PC-3 (cell line): ENCODE measurements at regions of chr10 and their contacts with region 1.

Region 1: DNA sequence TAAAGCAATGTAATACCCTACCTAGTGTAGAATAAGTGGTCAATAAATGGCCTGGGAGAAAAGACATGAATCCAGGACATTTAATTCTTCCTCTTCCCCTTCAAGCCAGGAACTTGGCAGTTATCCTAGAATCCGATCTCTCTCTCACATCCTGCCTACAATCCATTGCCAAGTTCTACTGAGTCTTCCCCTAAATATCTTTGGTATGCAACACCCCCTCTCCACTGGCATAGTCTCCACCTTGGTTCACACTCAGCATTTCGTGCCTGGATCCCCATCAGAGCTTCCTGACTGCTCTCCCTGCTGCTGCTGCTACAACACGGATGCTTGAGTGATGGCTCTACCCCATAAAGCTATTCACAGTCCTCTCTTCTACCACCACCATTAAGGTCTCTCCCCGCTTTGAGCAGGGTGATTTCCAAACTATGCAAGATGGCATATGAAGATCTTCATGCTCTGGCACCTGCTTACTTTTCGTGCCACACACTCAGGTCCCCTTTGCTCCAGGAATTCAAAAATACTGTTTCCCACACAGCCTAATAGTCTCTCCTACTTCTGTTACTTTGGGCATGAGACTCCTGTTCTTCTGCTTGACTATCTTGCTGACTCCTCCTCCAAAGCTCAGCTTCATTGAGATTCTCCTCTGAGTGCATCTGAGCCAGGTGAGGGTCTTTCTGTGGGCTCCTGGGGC is 4.8 kb downstream of the ANK3 start:
- DNase-seq: peak; percentile 100
- ATAC-seq: peak; percentile 89
- H3K4me3 ChIP-seq: peak overlapping the region; percentile 16; the same call in 1 of the 2 replicates
- H3K27ac ChIP-seq: peak overlapping the region; percentile 78
- H3K4me1 ChIP-seq: peaks cover 65% of the 10 kb centered on the region
- H3K27me3 ChIP-seq: no peaks in the 10 kb centered on the region
- CTCF ChIP-seq: no peak

Region 2: GRCh38 chr10:60237977-60238758 is 146.7 kb before region 1 on chr10:
- CTCF ChIA-PET with region 1: interaction called, 3 read pairs
- POLR2A ChIA-PET with region 1: no interaction called
- intact Hi-C with region 1: loop called (anchors 2 kb)
- DNase-seq: peak; percentile 89
- ATAC-seq: peak; percentile 99
- H3K4me3 ChIP-seq: peak overlapping the region; percentile 66
- H3K27ac ChIP-seq: 0 out of 2 replicates have a peak overlapping the region, but pooled peaks have one; percentile 3
- H3K4me1 ChIP-seq: peaks cover 25% of the 10 kb centered on the region
- H3K27me3 ChIP-seq: no peaks in the 10 kb centered on the region
- CTCF ChIP-seq: peak; percentile 96

Region 3: GRCh38 chr10:60314069-60314940 is 70.5 kb before region 1 on chr10:
- CTCF ChIA-PET with region 1: no interaction called
- POLR2A ChIA-PET with region 1: interaction called, 4 read pairs
- intact Hi-C with region 1: loop called (anchors 2 kb)
- DNase-seq: peak; percentile 82
- ATAC-seq: peak; percentile 77
- H3K4me3 ChIP-seq: peak overlapping the region; percentile 11; the same call in 1 of the 2 replicates
- H3K27ac ChIP-seq: peak overlapping the region; percentile 76
- H3K4me1 ChIP-seq: peaks cover 36% of the 10 kb centered on the region
- H3K27me3 ChIP-seq: no peaks in the 10 kb centered on the region
- CTCF ChIP-seq: no peak

Region 4: GRCh38 chr10:60343254-60343653 is 41.6 kb before region 1 on chr10:
- CTCF ChIA-PET with region 1: no interaction called
- POLR2A ChIA-PET with region 1: no interaction called
- intact Hi-C with region 1: loop called (anchors 2 kb)
- DNase-seq: peak; percentile 59
- ATAC-seq: peak; percentile 72
- H3K4me3 ChIP-seq: no peak overlapping the region
- H3K27ac ChIP-seq: no peak overlapping the region
- H3K4me1 ChIP-seq: peaks cover 18% of the 10 kb centered on the region
- H3K27me3 ChIP-seq: no peaks in the 10 kb centered on the region
- CTCF ChIP-seq: no peak

Region 5: GRCh38 chr10:60410970-60411369 is 26.1 kb after region 1 on chr10:
- CTCF ChIA-PET with region 1: no interaction called
- POLR2A ChIA-PET with region 1: no interaction called
- intact Hi-C with region 1: loop called (anchors 2 kb)
- DNase-seq: peak; percentile 75
- ATAC-seq: peak; percentile 64
- H3K4me3 ChIP-seq: no peak overlapping the region
- H3K27ac ChIP-seq: peak overlapping the region; percentile 34
- H3K4me1 ChIP-seq: peaks cover 44% of the 10 kb centered on the region
- H3K27me3 ChIP-seq: no peaks in the 10 kb centered on the region
- CTCF ChIP-seq: no peak

Region 6: DNA sequence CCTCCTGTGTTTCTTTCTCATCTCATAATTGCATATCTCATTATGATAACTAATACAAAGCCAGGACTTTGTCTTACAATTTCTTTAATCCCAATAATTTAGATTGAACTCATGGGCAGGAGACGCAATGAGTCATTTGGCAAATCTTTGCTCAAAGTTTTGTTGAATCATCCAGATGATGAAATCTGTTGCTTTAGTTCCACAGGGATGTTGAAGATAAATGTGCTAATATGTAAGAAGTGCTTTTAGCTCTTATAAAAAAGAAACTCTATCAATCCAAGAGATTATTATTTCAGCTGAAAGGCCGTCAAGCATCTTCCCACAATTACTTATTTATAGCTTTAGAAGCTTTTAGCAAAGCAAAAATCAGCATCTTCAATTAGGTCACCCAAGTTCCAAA is 41.5 kb after region 1 on chr10:
- CTCF ChIA-PET with region 1: no interaction called
- POLR2A ChIA-PET with region 1: interaction called, 4 read pairs
- intact Hi-C with region 1: loop called (anchors 1 kb)
- DNase-seq: peak; percentile 98
- ATAC-seq: peak; percentile 30
- H3K4me3 ChIP-seq: 0 out of 2 replicates have a peak overlapping the region, but pooled peaks have one; percentile 5
- H3K27ac ChIP-seq: peak overlapping the region; percentile 93
- H3K4me1 ChIP-seq: peaks cover 92% of the 10 kb centered on the region
- H3K27me3 ChIP-seq: no peaks in the 10 kb centered on the region
- CTCF ChIP-seq: no peak